ENCODE measurements at regions of chr12 and their contacts with region 1.

Region 1: GRCh38 chr12:69470189-69471075 is at the start of gene FRS2:
- DNase-seq: peak; percentile 92 to 93
- ATAC-seq: peak; percentile 99 to 100 (median 99)
- H3K4me3 ChIP-seq: peak within 1 kb of the TSS; percentile 74 to 98 (median 86)
- H3K27ac ChIP-seq: peak within 1 kb of the TSS; percentile 81 to 98 (median 92)
- H3K4me1 ChIP-seq: peaks cover 3 to 51% (median 44%) of the 10 kb centered on the region in 9 donors
- H3K27me3 ChIP-seq: no peaks in the 10 kb centered on the region
- CTCF ChIP-seq: peak in 8 of 9 donors; percentile 13 to 43 (median 27)
- total RNA-seq, gene FRS2: 18.2 to 26.0 (median 20.0) TPM

Region 2: DNA sequence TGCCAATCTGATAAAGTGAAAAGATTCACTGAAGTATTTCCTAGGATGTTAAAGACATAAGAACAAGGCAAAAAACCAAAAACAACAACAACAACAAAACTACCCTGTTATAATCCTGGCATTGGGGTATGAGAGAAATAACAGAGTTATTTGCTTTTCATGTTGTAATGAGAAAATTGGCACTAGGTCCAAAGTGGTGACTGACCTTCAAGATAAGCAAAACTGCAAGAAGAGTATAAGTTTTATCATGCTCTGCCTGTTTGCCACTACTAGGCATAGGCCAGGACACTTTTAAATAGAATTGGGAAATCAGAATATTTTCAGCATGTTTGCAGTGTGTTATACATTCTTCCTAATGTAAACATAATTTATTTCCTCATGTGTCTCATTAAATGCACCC is 397.4 kb before region 1 on chr12:
- intact Hi-C with region 1: no loop called
- DNase-seq: no peak
- ATAC-seq: no peak
- H3K4me3 ChIP-seq: no peak overlapping the region
- H3K27ac ChIP-seq: no peak overlapping the region
- H3K4me1 ChIP-seq: peaks cover 0 to 6% (median 0%) of the 10 kb centered on the region in 9 donors
- H3K27me3 ChIP-seq: peaks cover 0 to 3% (median 0%) of the 10 kb centered on the region in 7 donors
- CTCF ChIP-seq: no peak

Region 3: DNA sequence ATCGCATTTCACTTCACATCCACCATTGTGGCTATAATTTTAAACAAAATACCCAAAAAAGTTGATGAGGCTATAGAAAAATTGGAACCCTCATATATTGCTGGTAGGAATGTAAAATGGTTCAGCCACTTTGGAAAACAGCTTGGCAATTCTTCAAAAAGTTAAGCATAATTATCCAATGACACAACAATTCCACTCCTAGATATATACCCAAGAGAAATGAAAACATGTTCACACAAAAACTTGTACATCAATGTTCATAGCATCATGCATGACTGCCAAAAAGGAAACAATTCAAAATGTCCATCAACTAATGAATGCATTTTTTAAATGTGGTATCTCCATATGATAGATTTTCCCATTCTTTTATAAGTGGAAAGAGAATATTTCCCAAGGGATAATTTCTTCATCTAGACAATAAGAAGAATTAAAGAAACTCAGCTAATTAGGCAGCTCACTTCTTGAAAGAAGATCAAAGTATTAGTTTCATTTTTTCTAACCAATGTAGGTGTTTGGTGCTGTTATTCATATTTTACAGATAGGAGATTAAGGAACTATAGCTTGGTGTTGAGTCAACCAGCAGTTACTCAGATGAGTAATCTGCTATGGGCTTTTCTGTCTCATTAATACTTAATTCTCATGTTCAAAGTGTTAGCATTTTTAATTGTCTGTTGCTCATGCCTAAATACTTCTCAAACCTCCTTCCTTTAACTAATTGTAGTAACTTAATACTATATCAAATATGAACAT is 78.1 kb before region 1 on chr12:
- intact Hi-C with region 1: no loop called
- DNase-seq: no peak
- ATAC-seq: no peak
- H3K4me3 ChIP-seq: no peak overlapping the region
- H3K27ac ChIP-seq: no peak overlapping the region
- H3K4me1 ChIP-seq: no peaks in the 10 kb centered on the region
- H3K27me3 ChIP-seq: no peaks in the 10 kb centered on the region
- CTCF ChIP-seq: no peak

Region 4: GRCh38 chr12:69415471-69416275 is 54.8 kb before region 1 on chr12:
- intact Hi-C with region 1: no loop called
- DNase-seq: peak; percentile 32 to 37
- ATAC-seq: peak; percentile 79 to 95 (median 83)
- H3K4me3 ChIP-seq: no peak overlapping the region
- H3K27ac ChIP-seq: no peak overlapping the region
- H3K4me1 ChIP-seq: peaks cover 3 to 12% (median 7%) of the 10 kb centered on the region in 9 donors
- H3K27me3 ChIP-seq: no peaks in the 10 kb centered on the region
- CTCF ChIP-seq: peak; percentile 43 to 77 (median 68)

Region 5: DNA sequence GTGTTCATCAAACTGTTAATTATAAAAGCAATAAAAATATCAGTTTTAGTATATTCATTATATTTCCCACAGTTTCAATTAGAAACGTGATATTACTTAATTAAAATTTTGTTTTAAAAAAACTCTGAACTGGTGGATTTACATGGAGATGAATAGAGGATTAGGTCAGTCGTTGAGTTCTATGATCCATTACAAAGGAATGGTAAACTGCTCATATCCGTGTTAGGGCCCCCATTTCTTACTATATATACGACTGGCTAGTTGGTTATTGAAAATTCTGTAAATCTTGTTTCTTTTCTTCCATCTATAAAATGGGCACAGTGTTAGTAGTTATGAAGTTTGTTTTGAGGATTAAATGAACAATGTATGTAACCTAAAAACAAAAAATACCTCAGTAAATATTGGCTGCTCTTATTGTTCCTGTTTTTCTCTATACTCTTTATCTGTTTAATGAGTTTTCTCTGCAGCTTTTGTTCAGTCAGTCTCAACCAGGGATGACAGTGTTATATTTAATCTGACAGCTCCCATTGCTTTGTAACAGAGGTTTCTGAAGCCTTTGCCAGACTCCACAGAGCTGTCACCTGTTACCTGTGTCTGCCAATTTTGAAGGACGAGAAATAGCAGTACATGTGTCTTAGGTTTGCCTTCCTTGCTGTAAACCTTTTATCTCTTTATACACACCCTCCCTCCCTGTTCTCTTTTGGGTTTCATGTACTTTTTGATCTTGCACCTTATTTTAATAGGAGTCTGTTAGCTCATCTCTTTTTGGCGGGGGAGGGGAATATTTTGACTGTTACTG is 41.2 kb after region 1 on chr12:
- intact Hi-C with region 1: loop called in 1 of 10 experiments (anchors 5 kb)
- DNase-seq: no peak
- ATAC-seq: peak in 6 of 8 donors; percentile 38 to 81 (median 59)
- H3K4me3 ChIP-seq: no peak overlapping the region
- H3K27ac ChIP-seq: no peak overlapping the region
- H3K4me1 ChIP-seq: peaks cover 0 to 88% (median 79%) of the 10 kb centered on the region in 9 donors
- H3K27me3 ChIP-seq: no peaks in the 10 kb centered on the region
- CTCF ChIP-seq: no peak

Region 6: GRCh38 chr12:69527506-69528272 is 57.3 kb after region 1 on chr12:
- intact Hi-C with region 1: loop called in 1 of 10 experiments (anchors 10 kb)
- DNase-seq: no peak
- ATAC-seq: peak in 1 of 8 donors; percentile 25
- H3K4me3 ChIP-seq: no peak overlapping the region
- H3K27ac ChIP-seq: no peak overlapping the region
- H3K4me1 ChIP-seq: peaks cover 0 to 42% (median 17%) of the 10 kb centered on the region in 9 donors
- H3K27me3 ChIP-seq: no peaks in the 10 kb centered on the region
- CTCF ChIP-seq: no peak

Region 7: DNA sequence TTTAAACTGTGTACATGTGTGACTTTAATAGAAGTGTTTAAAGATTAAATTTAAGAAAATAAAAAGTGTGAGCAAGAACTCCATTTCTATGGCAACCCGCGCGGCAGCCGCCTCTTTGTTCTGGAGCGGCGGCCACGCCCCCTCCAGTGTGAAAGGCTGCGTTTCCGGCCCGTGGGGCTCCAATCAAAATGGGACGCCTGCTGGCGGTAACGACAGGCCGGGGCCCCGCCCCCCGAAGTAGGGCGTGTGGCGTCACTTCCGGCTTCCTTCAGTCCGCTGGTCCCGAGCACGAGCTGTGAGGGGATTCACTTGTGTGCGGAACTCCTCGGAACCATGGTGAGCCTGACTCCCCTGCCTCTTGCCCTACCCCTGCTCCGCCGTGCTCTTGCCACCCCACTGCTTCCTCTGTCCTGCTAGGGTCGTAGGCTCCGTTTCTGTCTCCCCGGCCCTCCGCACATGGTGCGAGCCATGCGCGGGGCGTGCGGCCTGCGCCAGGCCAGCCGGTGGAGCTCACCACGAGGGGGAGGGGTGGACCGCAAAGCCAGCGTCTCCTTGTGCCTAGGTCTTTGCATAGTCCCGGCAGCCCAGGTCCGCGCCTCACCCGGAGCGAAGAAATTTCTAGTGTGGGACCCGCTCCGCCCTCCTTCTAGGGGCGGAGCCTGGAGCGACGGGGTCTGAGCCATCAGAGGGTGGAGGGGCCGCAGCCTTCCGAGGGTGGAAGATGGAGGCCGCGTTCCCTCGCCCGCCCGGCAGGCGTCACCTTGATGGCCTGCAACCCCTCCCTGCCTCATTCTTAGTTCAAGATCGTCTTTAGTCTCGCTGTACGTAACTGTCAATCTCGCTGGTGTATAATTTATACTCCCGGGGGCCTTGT is 115.0 kb after region 1 on chr12 and contains the start of gene CCT2:
- intact Hi-C with region 1: loop called in 1 of 10 experiments (anchors 5 kb)
- DNase-seq: peak; percentile 97
- ATAC-seq: peak; percentile 99 to 100 (median 100)
- H3K4me3 ChIP-seq: peak within 1 kb of the TSS; percentile 76 to 99 (median 89)
- H3K27ac ChIP-seq: peak within 1 kb of the TSS; percentile 47 to 94 (median 86)
- H3K4me1 ChIP-seq: peaks cover 0 to 23% (median 15%) of the 10 kb centered on the region in 9 donors
- H3K27me3 ChIP-seq: no peaks in the 10 kb centered on the region
- CTCF ChIP-seq: peak in 6 of 9 donors; percentile 16 to 51 (median 36)
- total RNA-seq, gene CCT2: 61.3 to 115 (median 84.6) TPM

Region 8: DNA sequence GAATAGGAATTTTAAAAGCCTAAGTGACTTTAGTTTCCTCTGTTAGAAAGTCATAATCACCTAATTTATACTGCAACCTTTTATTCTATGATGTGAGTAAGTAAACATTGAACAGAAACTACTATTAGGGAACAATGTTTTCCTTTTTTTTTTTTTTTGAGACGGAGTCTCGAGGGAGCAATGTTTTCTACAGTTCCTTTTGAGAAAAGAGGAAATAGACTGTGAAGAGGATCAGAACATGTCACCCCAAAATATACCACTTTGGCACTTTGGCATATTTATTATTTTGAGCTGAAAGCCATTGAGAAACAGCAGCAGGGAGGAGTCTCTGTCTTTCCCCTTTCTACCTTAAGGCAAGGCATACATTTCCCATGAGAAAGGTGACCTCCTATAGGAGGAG is 610.1 kb after region 1 on chr12:
- intact Hi-C with region 1: no loop called
- DNase-seq: no peak
- ATAC-seq: no peak
- H3K4me3 ChIP-seq: no peak overlapping the region
- H3K27ac ChIP-seq: no peak overlapping the region
- H3K4me1 ChIP-seq: no peaks in the 10 kb centered on the region
- H3K27me3 ChIP-seq: no peaks in the 10 kb centered on the region
- CTCF ChIP-seq: no peak